IMR-90 (cell line): ENCODE measurements at regions of chr3 and their contacts with region 1.

Region 1: GRCh38 chr3:142385078-142385477 is 62.8 kb downstream of the XRN1 start:
- DNase-seq: no peak
- ATAC-seq: no peak
- H3K4me3 ChIP-seq: no peak overlapping the region
- H3K27ac ChIP-seq: no peak overlapping the region
- H3K4me1 ChIP-seq: no peaks in the 10 kb centered on the region
- H3K27me3 ChIP-seq: no peaks in the 10 kb centered on the region
- CTCF ChIP-seq: no peak
- POLR2A ChIP-seq: no peak
- RAD21 ChIP-seq: no peak

Region 2: DNA sequence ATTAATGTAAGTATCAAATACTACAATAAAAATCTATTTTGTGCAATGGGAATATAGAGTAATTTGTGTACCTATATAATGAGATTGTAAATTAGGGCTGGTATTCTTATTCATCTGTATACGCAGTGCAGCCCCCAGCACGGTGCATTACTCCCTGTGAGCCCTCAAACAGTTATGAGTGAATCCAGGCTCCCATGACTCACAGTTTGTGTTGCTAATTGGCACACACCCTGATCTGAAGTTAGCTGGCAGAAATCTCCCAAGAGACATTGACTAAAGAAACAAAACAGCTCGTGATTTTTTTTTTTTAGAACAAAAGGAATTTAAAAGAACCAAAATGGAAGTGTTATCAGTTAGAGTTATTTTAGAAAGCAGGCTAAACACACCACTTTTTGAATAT is 175.4 kb before region 1 on chr3:
- CTCF ChIA-PET with region 1: no interaction called
- POLR2A ChIA-PET with region 1: interaction called, 20 read pairs
- dilution Hi-C with region 1: no loop called
- in situ Hi-C with region 1: no loop called
- intact Hi-C with region 1: no loop called
- DNase-seq: peak; percentile 72
- ATAC-seq: peak; percentile 88
- H3K4me3 ChIP-seq: no peak overlapping the region
- H3K27ac ChIP-seq: peak overlapping the region; percentile 24; the same call in 1 of the 2 replicates
- H3K4me1 ChIP-seq: peaks cover 4% of the 10 kb centered on the region; the same call in 1 of the 2 replicates
- H3K27me3 ChIP-seq: no peaks in the 10 kb centered on the region
- CTCF ChIP-seq: no peak
- POLR2A ChIP-seq: no peak
- RAD21 ChIP-seq: no peak

Region 3: DNA sequence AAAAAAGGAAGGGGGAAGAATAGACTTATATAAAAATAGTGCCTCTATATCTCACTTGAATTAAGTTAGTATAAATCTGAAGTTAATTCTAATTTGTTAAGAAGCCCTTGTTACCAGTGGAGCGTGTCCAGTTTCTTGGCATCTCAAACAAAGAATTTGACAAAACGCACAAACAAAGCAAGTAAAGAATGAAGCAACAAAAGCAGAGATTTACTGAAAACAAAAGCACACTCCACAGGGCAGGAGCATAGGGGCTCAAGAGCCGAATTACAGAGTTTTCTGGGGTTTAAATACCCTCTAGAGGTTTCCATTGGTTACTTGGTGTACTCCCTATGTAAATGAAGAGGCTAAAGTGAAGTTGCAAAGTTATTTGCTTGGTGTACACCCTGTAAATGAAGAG is 125.7 kb before region 1 on chr3:
- CTCF ChIA-PET with region 1: no interaction called
- POLR2A ChIA-PET with region 1: no interaction called
- dilution Hi-C with region 1: no loop called
- in situ Hi-C with region 1: no loop called
- intact Hi-C with region 1: no loop called
- DNase-seq: no peak
- ATAC-seq: no peak
- H3K4me3 ChIP-seq: no peak overlapping the region
- H3K27ac ChIP-seq: no peak overlapping the region
- H3K4me1 ChIP-seq: no peaks in the 10 kb centered on the region
- H3K27me3 ChIP-seq: no peaks in the 10 kb centered on the region
- CTCF ChIP-seq: no peak
- POLR2A ChIP-seq: no peak
- RAD21 ChIP-seq: no peak